A549 (cell line): ENCODE measurements at regions of chr9 and their contacts with region 1.

Region 1: GRCh38 chr9:19174127-19174912 is 47.0 kb upstream of the PLIN2 start:
- DNase-seq: peak; percentile 63 to 66
- ATAC-seq: peak; percentile 93 to 96
- H3K4me3 ChIP-seq: no peak overlapping the region
- H3K27ac ChIP-seq: peak overlapping the region; percentile 65 to 66; a peak in 5 of 6 replicates
- H3K4me1 ChIP-seq: peaks cover 33% of the 10 kb centered on the region; the same call in 2 of the 3 replicates
- CTCF ChIP-seq: peak; percentile 84
- EP300 ChIP-seq: no peak
- POLR2A ChIP-seq: no peak
- RAD21 ChIP-seq: peak; percentile 79 to 90

Region 2: GRCh38 chr9:19048966-19049916 is 125.1 kb before region 1 on chr9 and contains the start of gene RRAGA:
- CTCF ChIA-PET with region 1: interaction called, 57 read pairs
- POLR2A ChIA-PET with region 1: interaction called, 20 read pairs
- DNase-seq: peak; percentile 94 to 97
- ATAC-seq: peak; percentile 90 to 93
- H3K4me3 ChIP-seq: peak within 1 kb of the TSS; percentile 82
- H3K27ac ChIP-seq: peak within 1 kb of the TSS; percentile 92 to 95
- H3K4me1 ChIP-seq: peaks cover 21% of the 10 kb centered on the region
- CTCF ChIP-seq: peak; percentile 79
- EP300 ChIP-seq: no peak
- POLR2A ChIP-seq: peak; percentile 98
- RAD21 ChIP-seq: peak; percentile 56 to 80
- polyA plus RNA-seq, gene RRAGA: 133 and 136 TPM in 2 replicates

Region 3: GRCh38 chr9:19102181-19102630 is 72.1 kb before region 1 on chr9:
- CTCF ChIA-PET with region 1: interaction called, 19 read pairs
- POLR2A ChIA-PET with region 1: no interaction called
- DNase-seq: peak in 1 of 2 experiments; percentile 28
- ATAC-seq: peak; percentile 54 to 64
- H3K4me3 ChIP-seq: peak overlapping the region; percentile 98
- H3K27ac ChIP-seq: peak overlapping the region; percentile 85 to 88
- H3K4me1 ChIP-seq: peaks cover 13% of the 10 kb centered on the region; the same call in 2 of the 3 replicates
- CTCF ChIP-seq: no peak
- EP300 ChIP-seq: no peak
- POLR2A ChIP-seq: no peak
- RAD21 ChIP-seq: no peak

Region 4: DNA sequence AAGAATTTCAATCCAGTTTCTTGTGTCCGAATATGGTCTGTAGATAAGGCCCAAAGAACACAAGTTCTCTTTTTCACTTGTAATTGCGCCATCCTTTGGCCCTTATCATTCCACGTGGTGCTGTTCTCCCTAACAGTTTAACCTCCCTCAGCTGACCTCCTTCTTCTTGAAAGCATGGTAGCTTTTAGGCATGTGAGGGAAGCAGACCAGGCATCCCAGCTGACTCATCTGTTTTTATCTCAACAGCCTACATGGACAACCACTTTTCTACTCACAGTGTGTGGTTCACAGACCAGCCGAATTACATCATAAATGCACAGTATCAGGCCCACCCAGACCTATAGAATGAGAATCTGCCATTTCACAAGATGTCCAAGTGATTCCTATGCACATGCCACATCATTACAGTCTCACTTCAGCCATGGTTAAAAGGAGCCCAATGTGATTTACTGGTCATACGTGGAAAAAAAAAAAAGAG is 20.1 kb before region 1 on chr9:
- CTCF ChIA-PET with region 1: interaction called, 14 read pairs
- POLR2A ChIA-PET with region 1: no interaction called
- DNase-seq: peak in 1 of 2 experiments; percentile 29
- ATAC-seq: peak; percentile 28 to 45; a peak in 3 of 6 replicates
- H3K4me3 ChIP-seq: no peak overlapping the region
- H3K27ac ChIP-seq: peak overlapping the region in 1 of 2 experiments; percentile 21; a peak in 4 of 6 replicates
- H3K4me1 ChIP-seq: peaks cover 17% of the 10 kb centered on the region
- CTCF ChIP-seq: no peak
- EP300 ChIP-seq: no peak
- POLR2A ChIP-seq: no peak
- RAD21 ChIP-seq: no peak

Region 5: DNA sequence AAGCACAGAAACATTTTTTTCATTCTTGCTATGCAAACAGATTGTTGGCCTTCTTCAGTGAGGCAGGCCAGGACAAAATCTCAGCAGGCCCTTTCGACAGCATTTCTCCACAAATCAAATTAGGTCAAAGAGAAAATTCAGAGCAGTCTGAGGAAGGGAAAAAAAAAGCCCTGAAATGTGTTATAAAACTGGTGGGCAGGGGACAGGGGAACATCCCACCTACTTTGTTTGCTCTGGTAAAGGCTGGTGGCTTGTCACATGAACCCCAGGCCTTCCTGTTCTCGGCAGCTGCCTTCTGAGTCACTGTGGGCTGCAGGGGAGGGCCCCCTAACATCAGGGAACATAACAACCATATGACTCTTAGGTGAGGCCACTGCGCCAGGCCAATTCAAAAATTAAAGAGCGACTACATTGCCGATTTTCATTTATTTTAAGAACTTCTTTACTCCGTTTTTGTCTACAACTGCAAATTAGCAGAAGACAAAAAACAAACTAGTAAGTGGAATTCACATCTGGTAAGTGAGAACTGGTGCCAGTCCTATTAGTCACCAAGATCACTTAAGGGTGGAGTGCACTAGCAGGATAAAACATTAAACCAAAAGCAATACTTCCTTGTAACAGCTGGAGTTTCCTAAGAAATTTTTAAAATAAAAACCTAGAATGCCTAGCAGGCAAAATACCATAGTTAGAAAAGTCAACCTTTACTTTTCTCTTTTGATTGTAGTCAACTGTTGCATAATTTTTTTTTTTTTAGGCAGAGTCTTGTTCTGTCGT is 10.0 kb after region 1 on chr9:
- CTCF ChIA-PET with region 1: interaction called, 18 read pairs
- POLR2A ChIA-PET with region 1: interaction called, 4 read pairs
- DNase-seq: peak; percentile 74 to 86
- ATAC-seq: peak; percentile 96 to 99
- H3K4me3 ChIP-seq: no peak overlapping the region
- H3K27ac ChIP-seq: peak overlapping the region; percentile 90 to 91
- H3K4me1 ChIP-seq: peaks cover 42% of the 10 kb centered on the region
- CTCF ChIP-seq: no peak
- EP300 ChIP-seq: peak; percentile 37 to 75; a peak in 2 of 5 replicates
- POLR2A ChIP-seq: no peak
- RAD21 ChIP-seq: no peak; a peak in 2 of 5 replicates